ENCODE measurements at regions of chr4 and their contacts with region 1.

Region 1: DNA sequence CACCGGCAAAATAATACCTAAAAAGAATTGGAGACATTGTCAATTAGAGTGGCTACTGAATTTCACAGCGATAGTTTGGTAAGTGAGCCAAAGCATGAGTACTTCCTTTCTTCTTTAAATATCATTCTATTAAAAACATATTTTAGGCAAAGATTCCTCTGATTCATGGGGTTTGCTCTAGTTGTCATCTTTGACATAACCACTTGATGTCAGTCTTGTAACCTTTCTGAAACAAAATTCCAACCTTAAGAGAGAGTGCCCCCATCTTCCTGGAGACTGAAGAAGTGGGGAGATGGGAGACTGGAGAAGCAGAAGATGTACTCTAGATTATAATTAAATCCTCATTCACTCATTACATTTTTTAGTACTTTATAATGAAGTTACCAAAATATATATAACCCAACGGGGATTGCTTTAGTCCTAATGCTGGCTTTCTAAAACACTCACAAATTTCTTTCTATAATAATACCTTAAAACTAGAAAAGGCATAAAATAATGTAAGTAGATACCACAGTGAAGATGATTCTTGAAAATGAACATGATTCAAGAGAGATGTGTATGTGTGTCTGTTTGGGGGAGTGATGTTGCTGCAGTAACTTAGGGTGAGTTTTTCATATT is 96.4 kb downstream of the EMCN start:
- DNase-seq: peak; percentile 30
- H3K4me3 ChIP-seq: no peak overlapping the region
- H3K27ac ChIP-seq: no peak overlapping the region
- H3K4me1 ChIP-seq: peaks cover 8% of the 10 kb centered on the region
- H3K27me3 ChIP-seq: no peaks in the 10 kb centered on the region
- CTCF ChIP-seq: peak; percentile 58 to 67

Region 2: DNA sequence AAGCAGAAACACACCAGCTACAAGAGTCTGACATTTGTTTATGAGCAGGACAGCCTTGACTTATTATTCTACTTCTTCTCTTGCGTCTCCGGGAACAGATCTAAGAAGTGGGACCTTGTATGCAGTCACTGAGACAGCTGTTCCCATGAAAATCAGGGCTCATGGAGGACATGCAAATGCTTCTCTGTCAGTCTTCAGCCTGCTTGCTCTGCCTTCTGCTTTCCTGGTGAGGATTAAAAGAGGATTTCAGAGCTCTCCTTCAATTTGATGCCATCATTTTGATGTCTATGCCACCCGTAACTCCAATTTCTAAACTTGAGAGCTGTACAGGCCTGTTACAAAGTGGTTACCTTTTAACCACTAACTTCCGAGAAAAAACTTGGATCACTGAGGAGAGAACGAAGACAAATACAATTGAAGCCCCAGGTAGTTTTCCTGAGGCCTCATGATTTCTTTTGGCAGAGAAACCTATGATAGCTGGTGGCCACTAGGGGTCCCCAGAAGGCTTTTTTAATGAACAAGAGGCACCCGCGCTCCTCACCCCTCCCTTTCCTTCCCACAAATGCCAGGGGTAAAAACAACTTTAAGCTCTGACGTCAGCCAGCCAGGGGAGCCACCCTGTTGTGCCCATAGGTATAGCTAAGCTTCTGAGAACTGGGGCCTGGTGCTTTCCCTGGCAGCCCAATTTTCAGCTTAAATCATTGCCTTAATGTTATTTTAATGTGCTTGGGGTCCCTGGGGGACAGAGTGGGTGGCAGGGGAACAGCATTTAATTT is 328.2 kb before region 1 on chr4:
- CTCF ChIA-PET with region 1: no interaction called
- dilution Hi-C with region 1: no loop called
- in situ Hi-C with region 1: no loop called
- intact Hi-C with region 1: loop called (anchors 1 kb)
- DNase-seq: peak; percentile 88
- H3K4me3 ChIP-seq: no peak overlapping the region
- H3K27ac ChIP-seq: peak overlapping the region; percentile 64
- H3K4me1 ChIP-seq: peaks cover 4% of the 10 kb centered on the region
- H3K27me3 ChIP-seq: no peaks in the 10 kb centered on the region
- CTCF ChIP-seq: peak; percentile 72 to 85

Region 3: DNA sequence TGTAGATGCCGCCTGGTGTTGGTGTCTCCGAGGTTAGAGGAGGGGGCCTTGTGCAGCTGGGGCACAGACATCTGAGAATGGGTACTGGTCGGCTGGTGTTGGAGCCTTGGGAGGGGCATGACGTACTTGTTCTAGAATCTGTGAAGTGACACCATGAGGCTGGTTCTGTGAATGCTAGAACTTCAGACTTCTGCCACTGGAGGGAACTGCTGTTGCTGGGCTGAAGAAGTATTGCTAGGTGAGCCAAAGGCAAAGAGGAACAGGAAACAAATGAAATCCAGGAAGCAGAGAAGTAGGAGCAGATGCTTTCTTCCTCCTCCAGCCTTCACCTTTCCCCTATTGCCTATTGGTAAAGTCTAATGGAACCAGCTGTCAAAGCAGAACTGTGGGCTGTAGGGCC is 110.3 kb before region 1 on chr4:
- CTCF ChIA-PET with region 1: no interaction called
- dilution Hi-C with region 1: no loop called
- in situ Hi-C with region 1: no loop called
- intact Hi-C with region 1: loop called (anchors 2 kb)
- DNase-seq: peak; percentile 42
- H3K4me3 ChIP-seq: no peak overlapping the region
- H3K27ac ChIP-seq: no peak overlapping the region
- H3K4me1 ChIP-seq: no peaks in the 10 kb centered on the region
- H3K27me3 ChIP-seq: no peaks in the 10 kb centered on the region
- CTCF ChIP-seq: peak; percentile 39 to 62

Region 4: GRCh38 chr4:100366213-100366612 is 55.3 kb before region 1 on chr4:
- CTCF ChIA-PET with region 1: no interaction called
- dilution Hi-C with region 1: no loop called
- in situ Hi-C with region 1: no loop called
- intact Hi-C with region 1: no loop called
- DNase-seq: peak; percentile 23
- H3K4me3 ChIP-seq: no peak overlapping the region
- H3K27ac ChIP-seq: no peak overlapping the region
- H3K4me1 ChIP-seq: peaks cover 7% of the 10 kb centered on the region
- H3K27me3 ChIP-seq: no peaks in the 10 kb centered on the region
- CTCF ChIP-seq: no peak

Region 5: DNA sequence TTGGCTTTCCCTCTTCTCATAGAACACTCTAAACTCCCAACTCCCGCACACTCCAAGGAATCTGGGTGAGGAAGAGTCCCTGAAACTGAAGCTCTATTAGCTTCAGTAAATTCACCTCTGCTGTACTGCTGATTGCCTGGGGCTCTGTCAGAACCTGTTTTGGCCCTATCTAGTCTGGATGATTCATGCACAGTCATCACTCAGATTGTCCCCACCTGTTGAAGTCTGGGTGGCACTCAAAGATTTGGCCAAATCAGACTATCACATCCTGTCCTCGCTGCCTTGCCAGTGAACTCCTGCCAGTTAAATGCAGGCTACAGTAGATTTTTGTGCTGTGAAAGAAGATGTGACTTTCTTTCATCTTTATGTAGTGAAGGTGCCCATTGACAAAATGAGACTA is 159.9 kb after region 1 on chr4:
- CTCF ChIA-PET with region 1: no interaction called
- dilution Hi-C with region 1: no loop called
- in situ Hi-C with region 1: no loop called
- intact Hi-C with region 1: loop called (anchors 10 kb)
- DNase-seq: peak; percentile 88
- H3K4me3 ChIP-seq: no peak overlapping the region
- H3K27ac ChIP-seq: no peak overlapping the region
- H3K4me1 ChIP-seq: peaks cover 13% of the 10 kb centered on the region
- H3K27me3 ChIP-seq: no peaks in the 10 kb centered on the region
- CTCF ChIP-seq: no peak

Region 6: GRCh38 chr4:100742045-100742444 is 320.6 kb after region 1 on chr4:
- CTCF ChIA-PET with region 1: no interaction called
- dilution Hi-C with region 1: no loop called
- in situ Hi-C with region 1: loop called in 1 of 2 experiments (anchors 25 kb)
- intact Hi-C with region 1: loop called (anchors 1 kb)
- DNase-seq: peak; percentile 70
- H3K4me3 ChIP-seq: no peak overlapping the region
- H3K27ac ChIP-seq: no peak overlapping the region
- H3K4me1 ChIP-seq: peaks cover 19% of the 10 kb centered on the region
- H3K27me3 ChIP-seq: no peaks in the 10 kb centered on the region
- CTCF ChIP-seq: peak; percentile 41 to 72

Region 7: DNA sequence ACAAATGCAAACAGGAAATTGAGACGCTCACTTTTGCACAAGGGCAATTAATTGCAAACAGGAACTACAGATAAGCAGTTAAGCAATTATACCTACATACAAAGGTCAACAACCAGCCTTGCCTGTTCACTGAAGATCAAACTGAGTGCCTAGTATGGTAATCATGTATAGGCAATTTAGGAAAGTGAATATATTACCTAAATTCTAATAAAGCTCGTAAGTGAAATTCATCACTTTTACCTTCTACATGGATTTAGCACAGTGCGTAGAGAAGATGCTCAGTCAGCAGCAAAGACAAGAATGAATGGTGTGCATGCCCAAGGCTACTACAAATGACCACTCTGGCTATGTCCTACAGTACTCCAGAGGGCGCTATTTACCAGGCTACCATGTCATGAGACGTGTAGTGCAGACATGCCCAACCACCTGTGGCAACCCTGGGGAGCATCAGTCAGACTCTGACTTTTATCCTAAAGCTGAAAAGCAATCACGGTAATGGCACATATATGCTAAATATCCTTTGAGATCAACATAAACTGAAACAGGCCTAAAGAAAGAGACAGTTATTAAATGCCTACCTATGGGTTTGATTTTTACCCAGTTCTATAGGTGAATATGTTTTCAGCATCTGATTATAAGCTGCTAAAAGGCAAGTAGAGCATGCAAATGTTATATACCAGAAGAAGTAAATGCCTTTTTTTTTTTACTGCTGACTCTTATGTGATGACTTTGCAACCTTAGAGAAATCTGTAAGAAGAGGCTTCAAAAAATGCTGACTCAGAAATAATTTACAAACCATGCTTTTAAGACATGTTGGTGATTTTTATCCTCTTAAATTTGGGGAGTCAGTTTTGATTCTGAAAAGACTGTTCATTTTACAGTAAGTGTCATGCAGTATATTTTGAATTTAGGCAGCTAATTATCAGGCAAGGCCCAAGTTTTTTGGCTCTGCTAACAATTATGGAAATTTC is 747.9 kb after region 1 on chr4:
- CTCF ChIA-PET with region 1: no interaction called
- dilution Hi-C with region 1: no loop called
- in situ Hi-C with region 1: no loop called
- intact Hi-C with region 1: loop called (anchors 5 kb)
- DNase-seq: peak; percentile 58
- H3K4me3 ChIP-seq: no peak overlapping the region
- H3K27ac ChIP-seq: no peak overlapping the region
- H3K4me1 ChIP-seq: peaks cover 28% of the 10 kb centered on the region
- H3K27me3 ChIP-seq: no peaks in the 10 kb centered on the region
- CTCF ChIP-seq: peak; percentile 80 to 83

Measured in mammary epithelial cell (primary cell).